ENCODE measurements at regions of chr3 and their contacts with region 1.

Region 1: GRCh38 chr3:13452490-13453335 is 27.4 kb upstream of the HDAC11 start:
- DNase-seq: peak; percentile 58 to 66 (median 63)
- H3K4me3 ChIP-seq: peak overlapping the region in 1 of 2 donors; percentile 72
- H3K4me3 Mint-ChIP-seq: peak overlapping the region; percentile 93 to 98 (median 98)
- H3K27ac ChIP-seq: peak overlapping the region; percentile 60
- H3K27ac Mint-ChIP-seq: peak overlapping the region; percentile 86 to 97 (median 96)
- H3K4me1 ChIP-seq: peaks cover 19% of the 10 kb centered on the region
- H3K4me1 Mint-ChIP-seq: peaks cover 10 to 25% (median 17%) of the 10 kb centered on the region in 4 donors
- H3K27me3 ChIP-seq: no peaks in the 10 kb centered on the region
- H3K27me3 Mint-ChIP-seq: no peaks in the 10 kb centered on the region

Region 2: GRCh38 chr3:13166243-13167063 is 286.3 kb before region 1 on chr3:
- CTCF ChIA-PET with region 1: no interaction called
- POLR2A ChIA-PET with region 1: no interaction called
- intact Hi-C with region 1: no loop called
- DNase-seq: no peak
- H3K4me3 ChIP-seq: no peak overlapping the region
- H3K4me3 Mint-ChIP-seq: no peak overlapping the region
- H3K27ac ChIP-seq: no peak overlapping the region
- H3K27ac Mint-ChIP-seq: no peak overlapping the region
- H3K4me1 ChIP-seq: no peaks in the 10 kb centered on the region
- H3K4me1 Mint-ChIP-seq: no peaks in the 10 kb centered on the region
- H3K27me3 ChIP-seq: no peaks in the 10 kb centered on the region
- H3K27me3 Mint-ChIP-seq: peaks cover 0 to 4% of the 10 kb centered on the region in 2 donors

Region 3: GRCh38 chr3:13308380-13308801 is 144.3 kb before region 1 on chr3:
- CTCF ChIA-PET with region 1: no interaction called
- POLR2A ChIA-PET with region 1: no interaction called
- intact Hi-C with region 1: loop called (anchors 1 kb)
- DNase-seq: peak in 4 of 5 donors; percentile 14 to 27 (median 22)
- H3K4me3 ChIP-seq: no peak overlapping the region
- H3K4me3 Mint-ChIP-seq: no peak overlapping the region
- H3K27ac ChIP-seq: no peak overlapping the region
- H3K27ac Mint-ChIP-seq: peak overlapping the region in 4 of 7 donors; percentile 5 to 76 (median 58)
- H3K4me1 ChIP-seq: no peaks in the 10 kb centered on the region
- H3K4me1 Mint-ChIP-seq: peaks cover 5 to 6% (median 6%) of the 10 kb centered on the region in 4 donors
- H3K27me3 ChIP-seq: no peaks in the 10 kb centered on the region
- H3K27me3 Mint-ChIP-seq: no peaks in the 10 kb centered on the region

Region 4: DNA sequence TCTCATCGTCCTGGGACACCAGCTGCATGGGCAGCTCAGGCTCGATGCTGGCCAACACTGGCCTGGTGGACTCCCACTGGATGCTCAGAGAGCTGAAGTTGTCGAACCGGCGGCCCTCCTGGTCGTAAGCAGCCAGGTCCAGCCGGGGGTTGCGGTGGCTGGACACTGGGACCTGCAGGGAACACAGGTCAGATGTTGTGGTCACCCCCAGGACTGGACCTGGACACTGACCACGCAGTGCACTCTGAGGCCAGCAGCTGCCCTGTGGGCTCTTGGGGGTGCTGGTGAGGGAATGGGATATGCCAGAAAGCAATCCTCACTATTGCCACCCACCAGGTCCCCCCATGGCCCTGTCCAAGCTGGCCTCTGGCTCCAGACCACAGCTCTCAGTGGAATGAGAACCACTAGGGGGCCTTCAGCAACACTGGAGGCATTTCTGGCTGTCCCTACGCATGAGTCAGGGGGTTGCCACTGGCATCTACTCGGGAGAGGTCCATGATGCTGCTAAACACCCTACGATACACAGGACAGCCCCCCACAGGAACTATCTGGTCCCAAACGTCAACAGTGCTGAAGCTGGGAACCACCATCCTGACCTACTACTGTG is 98.7 kb before region 1 on chr3:
- CTCF ChIA-PET with region 1: interaction called, 255 read pairs
- POLR2A ChIA-PET with region 1: interaction called, 24 read pairs
- intact Hi-C with region 1: no loop called
- DNase-seq: no peak
- H3K4me3 ChIP-seq: no peak overlapping the region
- H3K4me3 Mint-ChIP-seq: no peak overlapping the region
- H3K27ac ChIP-seq: no peak overlapping the region
- H3K27ac Mint-ChIP-seq: peak overlapping the region in 2 of 7 donors; percentile 64 to 77
- H3K4me1 ChIP-seq: peaks cover 21% of the 10 kb centered on the region
- H3K4me1 Mint-ChIP-seq: peaks cover 12 to 25% (median 14%) of the 10 kb centered on the region in 4 donors
- H3K27me3 ChIP-seq: no peaks in the 10 kb centered on the region
- H3K27me3 Mint-ChIP-seq: no peaks in the 10 kb centered on the region

Region 5: GRCh38 chr3:13391308-13391707 is 61.4 kb before region 1 on chr3:
- CTCF ChIA-PET with region 1: interaction called, 118 read pairs
- POLR2A ChIA-PET with region 1: interaction called, 23 read pairs
- intact Hi-C with region 1: loop called (anchors 1 kb)
- DNase-seq: peak in 4 of 5 donors; percentile 19 to 28 (median 22)
- H3K4me3 ChIP-seq: no peak overlapping the region
- H3K4me3 Mint-ChIP-seq: no peak overlapping the region
- H3K27ac ChIP-seq: no peak overlapping the region
- H3K27ac Mint-ChIP-seq: peak overlapping the region in 6 of 7 donors; percentile 30 to 92 (median 65)
- H3K4me1 ChIP-seq: peaks cover 3% of the 10 kb centered on the region
- H3K4me1 Mint-ChIP-seq: peaks cover 8 to 30% (median 15%) of the 10 kb centered on the region in 4 donors
- H3K27me3 ChIP-seq: no peaks in the 10 kb centered on the region
- H3K27me3 Mint-ChIP-seq: no peaks in the 10 kb centered on the region

Region 6: GRCh38 chr3:13419505-13420044 is 33.1 kb before region 1 on chr3:
- CTCF ChIA-PET with region 1: interaction called, 134 read pairs
- POLR2A ChIA-PET with region 1: interaction called, 137 read pairs
- intact Hi-C with region 1: loop called (anchors 1 kb)
- DNase-seq: peak in 4 of 5 donors; percentile 59 to 67 (median 66)
- H3K4me3 ChIP-seq: peak overlapping the region; percentile 55 to 84
- H3K4me3 Mint-ChIP-seq: peak overlapping the region; percentile 91 to 96 (median 94)
- H3K27ac ChIP-seq: peak overlapping the region; percentile 90
- H3K27ac Mint-ChIP-seq: peak overlapping the region; percentile 94 to 99 (median 97)
- H3K4me1 ChIP-seq: peaks cover 74% of the 10 kb centered on the region
- H3K4me1 Mint-ChIP-seq: peaks cover 45 to 85% (median 62%) of the 10 kb centered on the region in 4 donors
- H3K27me3 ChIP-seq: no peaks in the 10 kb centered on the region
- H3K27me3 Mint-ChIP-seq: no peaks in the 10 kb centered on the region

Region 7: GRCh38 chr3:13495921-13496723 is 43.4 kb after region 1 on chr3:
- CTCF ChIA-PET with region 1: no interaction called
- POLR2A ChIA-PET with region 1: no interaction called
- intact Hi-C with region 1: no loop called
- DNase-seq: peak; percentile 62 to 68 (median 63)
- H3K4me3 ChIP-seq: no peak overlapping the region
- H3K4me3 Mint-ChIP-seq: no peak overlapping the region
- H3K27ac ChIP-seq: no peak overlapping the region
- H3K27ac Mint-ChIP-seq: no peak overlapping the region
- H3K4me1 ChIP-seq: no peaks in the 10 kb centered on the region
- H3K4me1 Mint-ChIP-seq: peaks cover 0 to 5% (median under 1%) of the 10 kb centered on the region in 4 donors
- H3K27me3 ChIP-seq: no peaks in the 10 kb centered on the region
- H3K27me3 Mint-ChIP-seq: no peaks in the 10 kb centered on the region

Measured in CD4-positive, alpha-beta memory T cell (primary cell).